Cardiac septum (tissue), 1 donor: ENCODE measurements at regions of chr4 and their contacts with region 1.

Region 1: DNA sequence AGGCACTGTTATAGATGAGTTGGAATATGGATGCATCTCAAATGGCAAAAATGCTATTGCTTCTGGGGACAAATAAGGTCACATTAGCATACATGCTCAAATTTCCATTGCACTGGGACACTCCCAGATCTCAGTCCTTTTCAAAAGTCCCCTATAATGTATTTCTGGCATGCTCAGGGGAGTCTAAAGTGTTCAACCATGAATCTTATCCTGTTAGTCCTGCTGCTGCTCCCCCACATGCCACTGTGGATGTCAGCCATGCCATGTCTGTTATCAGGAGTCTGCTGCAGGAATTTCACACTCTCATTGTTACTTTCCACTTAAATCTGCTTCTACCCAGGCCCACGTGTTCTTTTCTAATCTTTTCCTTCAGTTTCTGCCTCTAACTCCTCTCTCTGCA is 1000.6 kb downstream of the CCSER1 start:
- DNase-seq: no peak

Region 2: GRCh38 chr4:90922174-90922573 is 205.7 kb before region 1 on chr4:
- intact Hi-C with region 1: no loop called
- DNase-seq: no peak

Region 3: GRCh38 chr4:91243132-91243531 is 115.3 kb after region 1 on chr4:
- intact Hi-C with region 1: loop called (anchors 10 kb)
- DNase-seq: peak; percentile 76